Ascending aorta (tissue), 2 donors: ENCODE measurements at regions of chr3 and their contacts with region 1.

Region 1: GRCh38 chr3:23611737-23612295 is 193.9 kb upstream of the UBE2E1 start:
- DNase-seq: peak in 1 of 2 donors; percentile 78
- H3K4me3 ChIP-seq: peak overlapping the region; percentile 28 to 61
- H3K27ac ChIP-seq: peak overlapping the region; percentile 81 to 83
- H3K4me1 ChIP-seq: peaks cover 0 to 5% of the 10 kb centered on the region in 2 donors
- H3K27me3 ChIP-seq: no peaks in the 10 kb centered on the region
- CTCF ChIP-seq: no peak

Region 2: DNA sequence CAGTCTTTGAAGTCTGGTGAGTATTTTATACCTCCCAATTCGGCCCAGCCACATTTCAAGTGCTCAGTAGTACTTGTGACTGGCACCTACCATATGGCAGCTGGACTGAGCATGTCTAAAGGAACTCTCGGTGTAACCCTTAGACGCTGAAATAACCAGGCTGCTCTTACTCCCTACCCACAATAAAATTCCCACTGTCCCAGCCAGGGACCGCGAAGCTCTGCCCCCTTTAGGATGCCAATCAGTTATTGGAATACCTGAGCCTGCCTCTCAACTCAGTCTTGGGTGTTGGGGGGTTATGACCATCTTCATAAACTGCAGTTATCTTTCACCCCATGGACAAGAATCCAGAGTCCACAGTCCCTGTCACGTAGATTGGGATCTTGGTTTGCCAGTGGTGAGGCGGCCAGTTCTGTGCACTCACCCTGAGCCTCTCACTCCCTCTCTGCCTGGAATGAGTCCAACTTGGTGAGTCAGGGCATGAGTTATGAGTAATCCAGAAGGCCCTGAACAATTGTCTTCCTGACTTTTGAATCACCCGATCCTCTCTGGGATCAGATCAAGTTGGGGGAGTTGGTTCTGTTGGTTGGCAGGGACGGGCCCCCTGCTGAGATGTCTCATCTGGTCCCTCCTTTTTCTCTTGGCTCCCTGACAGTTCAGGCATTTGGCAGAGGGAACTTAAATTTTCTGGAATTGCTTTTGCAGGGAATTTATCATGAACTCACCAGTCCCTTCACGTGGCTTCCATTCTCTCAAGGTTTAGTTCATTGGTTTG is 73.9 kb after region 1 on chr3:
- intact Hi-C with region 1: loop called (anchors 5 kb)
- DNase-seq: peak; percentile 55 to 94
- H3K4me3 ChIP-seq: no peak overlapping the region
- H3K27ac ChIP-seq: peak overlapping the region in 1 of 2 donors; percentile 20
- H3K4me1 ChIP-seq: peaks cover 0 to 8% of the 10 kb centered on the region in 2 donors
- H3K27me3 ChIP-seq: no peaks in the 10 kb centered on the region
- CTCF ChIP-seq: no peak